ENCODE measurements at regions of chr1 and their contacts with region 1.

Region 1: GRCh38 chr1:110172001-110172400 is 21.7 kb downstream of the SLC6A17 start:
- DNase-seq: no peak
- H3K4me3 ChIP-seq: no peak overlapping the region
- H3K27ac ChIP-seq: no peak overlapping the region
- H3K4me1 ChIP-seq: peaks cover 4% of the 10 kb centered on the region
- H3K27me3 ChIP-seq: no peaks in the 10 kb centered on the region
- CTCF ChIP-seq: no peak

Region 2: GRCh38 chr1:110130113-110130596 is 41.8 kb before region 1 on chr1:
- CTCF ChIA-PET with region 1: no interaction called
- POLR2A ChIA-PET with region 1: no interaction called
- intact Hi-C with region 1: no loop called
- DNase-seq: no peak
- H3K4me3 ChIP-seq: no peak overlapping the region
- H3K27ac ChIP-seq: no peak overlapping the region
- H3K4me1 ChIP-seq: no peaks in the 10 kb centered on the region
- H3K27me3 ChIP-seq: peaks cover 70% of the 10 kb centered on the region
- CTCF ChIP-seq: 0 out of 2 replicates have a peak, but pooled peaks have one; percentile 18

Region 3: DNA sequence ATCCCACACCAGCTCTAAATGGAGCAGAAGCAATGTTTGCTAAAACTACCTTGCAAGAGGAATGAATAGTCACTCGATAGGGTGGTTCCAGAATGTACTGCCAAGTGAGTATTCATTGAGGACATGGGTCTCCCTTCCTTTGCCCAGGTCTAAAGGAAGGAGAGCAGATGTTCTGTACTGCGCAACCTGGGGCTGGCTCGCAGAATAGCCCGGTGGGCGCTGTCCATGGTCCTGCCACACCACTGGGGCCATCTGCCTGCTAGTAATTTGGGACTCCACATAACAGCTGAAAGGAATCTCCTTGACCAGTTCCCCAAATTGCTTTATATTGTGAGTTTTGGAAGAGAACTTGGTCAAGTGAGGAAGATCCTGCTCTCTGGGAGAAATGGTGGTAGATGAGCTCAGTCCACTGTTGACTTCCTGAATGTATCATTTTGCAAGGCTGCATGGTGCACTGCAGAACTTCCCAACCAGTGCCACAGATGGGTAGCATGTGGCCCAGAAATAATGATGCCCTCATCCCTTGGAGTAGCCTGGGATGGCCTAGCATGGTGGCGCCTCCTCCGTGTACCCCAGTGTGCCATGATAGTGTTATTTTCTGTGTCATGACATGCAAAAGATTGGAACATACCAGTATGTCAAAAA is 16.0 kb before region 1 on chr1:
- CTCF ChIA-PET with region 1: no interaction called
- POLR2A ChIA-PET with region 1: no interaction called
- intact Hi-C with region 1: loop called (anchors 1 kb)
- DNase-seq: peak; percentile 50
- H3K4me3 ChIP-seq: no peak overlapping the region
- H3K27ac ChIP-seq: no peak overlapping the region
- H3K4me1 ChIP-seq: no peaks in the 10 kb centered on the region
- H3K27me3 ChIP-seq: peaks cover 77% of the 10 kb centered on the region
- CTCF ChIP-seq: no peak

Region 4: GRCh38 chr1:110393691-110394564 is 221.9 kb after region 1 on chr1:
- CTCF ChIA-PET with region 1: no interaction called
- POLR2A ChIA-PET with region 1: no interaction called
- intact Hi-C with region 1: no loop called
- DNase-seq: no peak
- H3K4me3 ChIP-seq: no peak overlapping the region
- H3K27ac ChIP-seq: no peak overlapping the region
- H3K4me1 ChIP-seq: no peaks in the 10 kb centered on the region
- H3K27me3 ChIP-seq: no peaks in the 10 kb centered on the region
- CTCF ChIP-seq: no peak

Measured in A673 (cell line).